ENCODE measurements at regions of chr12 and their contacts with region 1.

Region 1: DNA sequence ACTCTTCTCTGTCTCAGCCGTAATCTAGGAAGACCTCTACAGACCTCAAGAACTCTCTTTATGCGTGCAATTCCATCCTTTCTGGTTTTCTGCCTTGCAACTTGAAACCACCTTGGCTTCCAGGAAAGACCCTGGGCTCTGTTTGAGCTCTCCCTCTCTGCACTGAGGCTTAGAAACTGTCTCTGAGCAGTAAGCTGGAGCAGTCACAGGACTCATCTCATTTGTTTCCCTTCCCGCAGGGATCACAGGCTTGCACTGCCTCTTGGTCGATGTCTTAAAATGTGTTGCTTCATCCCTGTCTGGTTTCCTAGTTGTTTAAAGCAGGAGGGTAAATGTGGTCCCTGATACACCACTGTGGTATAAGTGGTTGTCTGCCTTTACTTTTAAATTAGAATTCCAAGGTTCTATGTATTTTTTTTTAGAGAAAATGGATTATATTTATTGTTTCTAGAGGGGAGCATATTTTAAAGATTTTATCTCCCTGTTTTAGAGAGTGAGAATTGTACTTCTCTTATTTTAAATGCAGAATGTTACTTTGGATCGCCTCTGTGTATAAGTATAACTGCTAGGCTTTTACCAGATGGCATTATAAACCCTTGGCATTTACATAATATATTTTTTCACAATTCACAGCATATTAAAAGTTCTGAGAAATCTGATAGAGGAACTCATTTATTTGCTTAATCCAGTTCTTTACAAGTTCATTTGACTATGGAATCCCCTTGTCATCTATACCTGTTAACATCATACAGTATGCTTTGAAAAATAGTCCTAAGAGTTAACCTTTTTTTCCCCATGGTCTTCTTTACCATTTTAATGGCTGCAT is 26.4 kb downstream of the EID3 start:
- DNase-seq: no peak
- ATAC-seq: peak; percentile 68
- H3K4me3 ChIP-seq: no peak overlapping the region
- H3K27ac ChIP-seq: no peak overlapping the region
- H3K4me1 ChIP-seq: no peaks in the 10 kb centered on the region
- H3K27me3 ChIP-seq: no peaks in the 10 kb centered on the region

Region 2: DNA sequence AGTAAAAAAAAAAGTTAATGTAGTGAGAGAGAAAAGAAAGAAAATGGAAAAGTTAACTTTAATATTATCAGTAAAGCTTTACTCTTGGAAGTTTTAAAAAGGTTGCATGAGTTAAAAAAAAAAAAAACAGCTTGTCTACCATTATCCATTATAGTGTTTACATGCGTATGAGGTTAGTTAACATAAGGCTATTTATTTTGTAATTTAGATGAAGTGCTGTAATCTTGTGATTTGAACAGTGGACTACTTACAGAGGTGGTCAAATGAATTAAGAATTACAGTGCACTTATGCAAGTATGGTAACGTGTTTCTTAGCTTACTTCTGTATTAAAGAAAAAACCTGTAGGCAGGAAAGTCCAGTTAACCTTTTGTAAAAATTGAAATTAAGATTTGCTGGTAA is 808.3 kb after region 1 on chr12:
- intact Hi-C with region 1: loop called in 1 of 2 experiments (anchors 10 kb)
- DNase-seq: no peak
- ATAC-seq: no peak
- H3K4me3 ChIP-seq: no peak overlapping the region
- H3K27ac ChIP-seq: no peak overlapping the region
- H3K4me1 ChIP-seq: no peaks in the 10 kb centered on the region
- H3K27me3 ChIP-seq: no peaks in the 10 kb centered on the region

Measured in aorta (tissue), 5 donors.